ENCODE measurements at regions of chr2 and their contacts with region 1.

Region 1: DNA sequence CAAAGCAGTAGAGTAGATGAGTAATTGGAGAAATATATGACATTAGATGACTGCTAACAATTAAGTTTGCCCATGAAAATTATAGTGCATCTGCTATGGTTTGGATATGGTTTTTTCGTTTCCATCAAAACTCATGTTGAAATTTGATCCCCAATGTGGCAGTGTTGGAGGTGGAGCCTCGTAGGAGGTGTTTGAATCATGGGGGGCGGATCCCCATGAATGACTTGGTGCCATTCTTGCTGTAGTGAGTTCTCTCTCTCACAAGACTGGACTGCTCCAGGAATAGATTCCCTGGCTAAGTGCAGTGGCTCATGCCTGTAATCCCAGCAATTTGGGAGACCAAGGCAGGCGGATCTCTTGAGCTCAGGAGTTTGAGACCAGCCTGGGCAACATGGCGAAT is 9.7 kb upstream of the CUL3 start:
- DNase-seq: no peak
- ATAC-seq: no peak
- H3K4me3 ChIP-seq: no peak overlapping the region
- H3K27ac ChIP-seq: no peak overlapping the region
- H3K4me1 ChIP-seq: no peaks in the 10 kb centered on the region
- H3K27me3 ChIP-seq: no peaks in the 10 kb centered on the region
- CTCF ChIP-seq: no peak
- POLR2A ChIP-seq: no peak

Region 2: DNA sequence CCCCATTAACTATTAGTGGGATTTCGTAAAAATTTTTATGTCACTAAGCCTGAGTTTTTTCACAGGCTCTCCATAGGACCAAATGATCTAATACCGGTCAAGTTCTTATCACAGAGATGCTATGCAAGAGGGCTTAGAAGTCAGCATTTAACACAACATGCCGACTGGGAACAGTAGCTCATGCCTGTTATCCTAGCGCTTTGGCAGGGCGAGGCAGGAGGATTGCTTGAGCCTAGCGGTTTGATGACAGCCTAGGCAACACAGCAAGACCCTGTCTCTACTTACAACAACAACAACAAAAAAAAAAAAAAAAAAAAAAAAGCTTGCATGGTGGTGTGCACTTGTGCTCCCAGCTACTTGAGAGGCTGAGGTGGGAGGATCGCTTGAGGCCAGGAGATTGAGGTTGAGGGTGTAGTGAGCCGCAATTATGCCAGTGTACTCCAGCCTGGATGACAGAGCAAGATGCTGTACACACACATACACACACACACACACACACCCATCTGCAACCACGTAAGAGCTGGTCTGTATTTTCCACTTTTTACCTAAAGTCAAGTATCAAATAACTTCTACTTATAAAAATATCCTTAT is 125.4 kb before region 1 on chr2:
- intact Hi-C with region 1: loop called in 1 of 10 experiments (anchors 10 kb)
- DNase-seq: no peak
- ATAC-seq: peak in 1 of 4 donors; percentile 16
- H3K4me3 ChIP-seq: no peak overlapping the region
- H3K27ac ChIP-seq: no peak overlapping the region
- H3K4me1 ChIP-seq: no peaks in the 10 kb centered on the region
- H3K27me3 ChIP-seq: no peaks in the 10 kb centered on the region
- CTCF ChIP-seq: no peak
- POLR2A ChIP-seq: no peak

Region 3: GRCh38 chr2:224802407-224802806 is 207.6 kb after region 1 on chr2:
- intact Hi-C with region 1: no loop called
- DNase-seq: no peak
- ATAC-seq: peak in 2 of 4 donors; percentile 45 to 65
- H3K4me3 ChIP-seq: no peak overlapping the region
- H3K27ac ChIP-seq: no peak overlapping the region
- H3K4me1 ChIP-seq: no peaks in the 10 kb centered on the region
- H3K27me3 ChIP-seq: no peaks in the 10 kb centered on the region
- CTCF ChIP-seq: no peak
- POLR2A ChIP-seq: no peak